ENCODE measurements at regions of chr11 and their contacts with region 1.

Region 1: GRCh38 chr11:105923807-105924206 is 98.2 kb downstream of the MSANTD4 start:
- DNase-seq: peak; percentile 80
- ATAC-seq: peak; percentile 95
- H3K4me3 ChIP-seq: 0 out of 2 replicates have a peak overlapping the region, but pooled peaks have one; percentile 2
- H3K27ac ChIP-seq: no peak overlapping the region
- H3K4me1 ChIP-seq: peaks cover 13% of the 10 kb centered on the region
- H3K27me3 ChIP-seq: no peaks in the 10 kb centered on the region
- CTCF ChIP-seq: no peak

Region 2: GRCh38 chr11:105910095-105910715 is 13.6 kb before region 1 on chr11:
- CTCF ChIA-PET with region 1: no interaction called
- POLR2A ChIA-PET with region 1: no interaction called
- intact Hi-C with region 1: loop called (anchors 1 kb)
- DNase-seq: peak; percentile 91
- ATAC-seq: peak; percentile 99
- H3K4me3 ChIP-seq: no peak overlapping the region
- H3K27ac ChIP-seq: peak overlapping the region; percentile 10; the same call in 1 of the 2 replicates
- H3K4me1 ChIP-seq: peaks cover 17% of the 10 kb centered on the region
- H3K27me3 ChIP-seq: no peaks in the 10 kb centered on the region
- CTCF ChIP-seq: no peak

Region 3: DNA sequence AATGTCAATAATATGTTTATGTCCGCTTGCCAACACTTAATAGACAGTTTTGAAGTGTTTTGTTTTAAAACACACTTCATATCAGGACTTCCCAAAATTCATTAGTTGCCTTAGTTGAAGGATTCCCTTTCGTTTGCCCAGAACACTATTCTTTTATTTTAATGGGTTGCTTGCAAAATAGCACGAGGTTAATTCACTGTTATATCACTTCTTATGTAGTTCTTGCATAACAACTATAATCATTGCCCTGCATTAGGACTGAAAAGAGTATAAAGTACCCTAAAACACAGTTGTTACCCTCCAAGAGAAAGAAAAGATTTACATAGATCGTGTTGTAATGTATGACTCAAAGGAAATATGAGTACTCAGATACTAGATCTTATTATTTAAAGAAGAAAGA is 25.4 kb after region 1 on chr11:
- CTCF ChIA-PET with region 1: no interaction called
- POLR2A ChIA-PET with region 1: no interaction called
- intact Hi-C with region 1: no loop called
- DNase-seq: no peak
- ATAC-seq: no peak
- H3K4me3 ChIP-seq: no peak overlapping the region
- H3K27ac ChIP-seq: no peak overlapping the region
- H3K4me1 ChIP-seq: no peaks in the 10 kb centered on the region
- H3K27me3 ChIP-seq: no peaks in the 10 kb centered on the region
- CTCF ChIP-seq: no peak

Region 4: GRCh38 chr11:106021967-106022794 is 98.4 kb after region 1 on chr11 and contains the start of gene MSANTD4:
- CTCF ChIA-PET with region 1: no interaction called
- POLR2A ChIA-PET with region 1: no interaction called
- intact Hi-C with region 1: loop called (anchors 5 kb)
- DNase-seq: peak; percentile 100
- ATAC-seq: peak; percentile 97
- H3K4me3 ChIP-seq: peak within 1 kb of the TSS; percentile 91
- H3K27ac ChIP-seq: peak within 1 kb of the TSS; percentile 9; the same call in 1 of the 2 replicates
- H3K4me1 ChIP-seq: peaks cover 28% of the 10 kb centered on the region
- H3K27me3 ChIP-seq: no peaks in the 10 kb centered on the region
- CTCF ChIP-seq: no peak
- total RNA-seq, gene MSANTD4: 18.0 and 33.7 TPM in 2 replicates